ENCODE measurements at regions of chr17 and their contacts with region 1.

Region 1: GRCh38 chr17:51833620-51834019 is 324.9 kb downstream of the CA10 start:
- DNase-seq: no peak
- H3K4me3 ChIP-seq: no peak overlapping the region
- H3K4me3 Mint-ChIP-seq: no peak overlapping the region
- H3K27ac Mint-ChIP-seq: no peak overlapping the region
- H3K4me1 ChIP-seq: no peaks in the 10 kb centered on the region
- H3K4me1 Mint-ChIP-seq: no peaks in the 10 kb centered on the region
- H3K27me3 ChIP-seq: no peaks in the 10 kb centered on the region
- H3K27me3 Mint-ChIP-seq: peaks cover 3% of the 10 kb centered on the region
- CTCF ChIP-seq: no peak

Region 2: GRCh38 chr17:51461578-51462004 is 372.0 kb before region 1 on chr17:
- CTCF ChIA-PET with region 1: no interaction called
- POLR2A ChIA-PET with region 1: interaction called, 10 read pairs
- intact Hi-C with region 1: no loop called
- DNase-seq: peak; percentile 74 to 79
- H3K4me3 ChIP-seq: no peak overlapping the region
- H3K4me3 Mint-ChIP-seq: no peak overlapping the region
- H3K27ac Mint-ChIP-seq: no peak overlapping the region
- H3K4me1 ChIP-seq: no peaks in the 10 kb centered on the region
- H3K4me1 Mint-ChIP-seq: no peaks in the 10 kb centered on the region
- H3K27me3 ChIP-seq: no peaks in the 10 kb centered on the region; the same call in 1 of the 2 replicates
- H3K27me3 Mint-ChIP-seq: peaks cover 18% of the 10 kb centered on the region
- CTCF ChIP-seq: peak; percentile 80 to 89

Region 3: GRCh38 chr17:51888816-51889215 is 55.2 kb after region 1 on chr17:
- CTCF ChIA-PET with region 1: no interaction called
- POLR2A ChIA-PET with region 1: no interaction called
- intact Hi-C with region 1: no loop called
- DNase-seq: no peak
- H3K4me3 ChIP-seq: no peak overlapping the region
- H3K4me3 Mint-ChIP-seq: no peak overlapping the region
- H3K27ac Mint-ChIP-seq: no peak overlapping the region
- H3K4me1 ChIP-seq: no peaks in the 10 kb centered on the region
- H3K4me1 Mint-ChIP-seq: no peaks in the 10 kb centered on the region
- H3K27me3 ChIP-seq: no peaks in the 10 kb centered on the region
- H3K27me3 Mint-ChIP-seq: peaks cover 21% of the 10 kb centered on the region
- CTCF ChIP-seq: no peak